ENCODE measurements at regions of chr13 and their contacts with region 1.

Region 1: GRCh38 chr13:37602747-37603381 is 4.3 kb upstream of the POSTN start:
- DNase-seq: no peak
- ATAC-seq: peak; percentile 43 to 47

Region 2: GRCh38 chr13:37074703-37075102 is 528.2 kb before region 1 on chr13:
- intact Hi-C with region 1: loop called in 1 of 2 experiments (anchors 10 kb)
- DNase-seq: no peak
- ATAC-seq: peak in 1 of 2 donors; percentile 53

Region 3: DNA sequence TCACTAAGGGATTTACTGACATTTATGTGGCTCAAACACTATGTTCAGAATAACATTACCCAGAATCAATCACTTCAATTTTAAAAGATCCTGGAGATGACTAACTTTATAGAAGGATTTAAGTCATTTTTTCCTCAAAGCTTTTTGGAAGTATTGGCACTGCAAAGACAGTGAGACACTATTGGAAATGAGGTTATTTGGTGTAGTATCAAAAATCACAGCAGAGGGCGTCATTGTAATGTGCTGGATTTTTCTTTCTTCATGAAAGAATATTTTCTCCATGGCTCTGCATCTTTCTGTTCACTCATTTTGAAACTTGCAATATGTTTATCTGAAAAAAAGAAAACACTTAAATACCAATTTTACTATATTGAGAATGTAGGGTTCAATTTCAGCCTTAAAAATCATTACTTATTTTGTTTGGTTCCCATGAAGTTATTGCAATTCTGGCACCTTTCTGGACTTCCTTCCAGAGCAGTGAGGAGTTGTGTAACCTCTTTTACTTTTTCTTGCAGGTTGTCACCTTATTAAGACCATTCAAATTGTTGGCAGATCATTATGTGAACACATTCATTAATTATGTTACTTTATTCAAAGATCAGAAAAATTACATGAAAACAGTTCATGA is 493.7 kb before region 1 on chr13:
- intact Hi-C with region 1: loop called (anchors 1 to 2 kb)
- DNase-seq: no peak
- ATAC-seq: peak; percentile 34 to 70

Region 4: GRCh38 chr13:37395566-37395965 is 207.3 kb before region 1 on chr13:
- intact Hi-C with region 1: no loop called
- DNase-seq: no peak
- ATAC-seq: no peak

Measured in left cardiac atrium (tissue), 4 donors.